Heart left ventricle (tissue), 16 donors: ENCODE measurements at regions of chr5 and their contacts with region 1.

Region 1: GRCh38 chr5:61881821-61882487 is 424.1 kb upstream of the KIF2A start:
- DNase-seq: no peak
- ATAC-seq: no peak
- H3K4me3 ChIP-seq: no peak overlapping the region
- H3K27ac ChIP-seq: no peak overlapping the region
- H3K4me1 ChIP-seq: no peaks in the 10 kb centered on the region
- H3K27me3 ChIP-seq: no peaks in the 10 kb centered on the region
- CTCF ChIP-seq: no peak
- POLR2A ChIP-seq: no peak

Region 2: GRCh38 chr5:61575103-61575502 is 306.9 kb before region 1 on chr5:
- intact Hi-C with region 1: no loop called
- DNase-seq: no peak
- ATAC-seq: peak in 3 of 4 donors; percentile 22 to 53 (median 24)
- H3K4me3 ChIP-seq: no peak overlapping the region
- H3K27ac ChIP-seq: no peak overlapping the region
- H3K4me1 ChIP-seq: peaks cover 0 to 6% (median 0%) of the 10 kb centered on the region in 12 donors
- H3K27me3 ChIP-seq: no peaks in the 10 kb centered on the region
- CTCF ChIP-seq: no peak
- POLR2A ChIP-seq: no peak

Region 3: DNA sequence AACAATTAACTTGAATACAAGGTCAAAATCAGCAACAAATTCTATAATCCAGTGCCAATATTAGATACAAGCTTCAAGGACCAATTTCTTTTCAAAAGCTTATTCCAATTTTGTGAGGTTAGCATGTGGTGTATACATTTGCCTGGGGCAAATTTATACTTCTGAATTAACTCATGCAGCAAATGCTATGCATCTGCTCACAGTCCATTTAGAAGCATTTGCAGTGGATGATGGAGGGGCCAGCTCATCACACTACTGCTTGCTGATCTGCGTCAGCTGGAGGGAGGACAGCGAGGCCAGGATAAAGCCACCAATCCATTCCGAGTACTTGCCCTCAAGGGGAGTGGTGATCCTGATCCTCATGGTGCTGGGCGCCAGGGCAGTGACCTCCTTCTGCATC is 50.2 kb before region 1 on chr5:
- intact Hi-C with region 1: loop called in 1 of 10 experiments (anchors 2 kb)
- DNase-seq: no peak
- ATAC-seq: no peak
- H3K4me3 ChIP-seq: no peak overlapping the region
- H3K27ac ChIP-seq: no peak overlapping the region
- H3K4me1 ChIP-seq: no peaks in the 10 kb centered on the region
- H3K27me3 ChIP-seq: peaks cover 0 to 8% (median 0%) of the 10 kb centered on the region in 9 donors
- CTCF ChIP-seq: no peak
- POLR2A ChIP-seq: no peak